Activated CD8-positive, alpha-beta T cell treated with anti-CD3 and anti-CD28 coated beads for 36 hours (primary cell): ENCODE measurements at regions of chr15 and their contacts with region 1.

Region 1: DNA sequence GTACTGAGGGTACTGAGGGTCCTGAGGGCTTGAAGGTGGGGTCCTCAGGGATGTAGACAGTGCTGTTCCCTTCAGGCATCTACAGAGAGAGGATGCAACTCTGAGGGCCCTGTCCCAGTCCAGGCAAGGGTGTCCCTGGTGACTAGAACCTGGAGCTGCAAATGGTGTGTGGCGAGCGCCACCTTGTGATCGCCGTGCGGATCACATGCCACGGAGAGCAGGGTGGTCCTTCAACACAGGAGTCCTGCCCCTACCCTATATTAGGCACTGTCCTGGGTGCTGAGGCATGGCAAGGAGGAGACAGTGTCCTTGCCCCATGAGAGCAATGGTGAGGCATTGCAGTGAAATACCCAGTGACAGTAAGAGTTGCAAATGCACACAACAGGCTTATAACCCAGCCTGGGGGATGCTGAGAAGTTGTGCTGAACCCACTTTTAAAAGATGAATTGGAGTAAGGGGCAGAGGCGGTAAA is 23.6 kb downstream of the RHCG start:
- DNase-seq: peak; percentile 71
- ATAC-seq: peak; percentile 85
- H3K4me3 Mint-ChIP-seq: no peak overlapping the region
- H3K27ac Mint-ChIP-seq: no peak overlapping the region
- H3K4me1 Mint-ChIP-seq: peaks cover 3% of the 10 kb centered on the region
- H3K27me3 Mint-ChIP-seq: peaks cover 10% of the 10 kb centered on the region
- CTCF ChIP-seq: peak; percentile 87

Region 2: GRCh38 chr15:89442671-89443307 is 30.0 kb before region 1 on chr15:
- CTCF ChIA-PET with region 1: interaction called, 28 read pairs
- POLR2A ChIA-PET with region 1: no interaction called
- intact Hi-C with region 1: no loop called
- DNase-seq: peak; percentile 81
- ATAC-seq: peak; percentile 92
- H3K4me3 Mint-ChIP-seq: no peak overlapping the region
- H3K27ac Mint-ChIP-seq: no peak overlapping the region
- H3K4me1 Mint-ChIP-seq: no peaks in the 10 kb centered on the region
- H3K27me3 Mint-ChIP-seq: peaks cover 33% of the 10 kb centered on the region
- CTCF ChIP-seq: peak; percentile 85